ENCODE measurements at regions of chr16 and their contacts with region 1.

Region 1: GRCh38 chr16:19094541-19095365 is 19.0 kb upstream of the ITPRIPL2 start:
- DNase-seq: no peak
- ATAC-seq: no peak
- H3K4me3 ChIP-seq: no peak overlapping the region
- H3K27ac ChIP-seq: no peak overlapping the region
- H3K4me1 ChIP-seq: peaks cover 0 to 5% (median 0%) of the 10 kb centered on the region in 12 donors
- H3K27me3 ChIP-seq: no peaks in the 10 kb centered on the region
- CTCF ChIP-seq: peak in 3 of 12 donors; percentile 7 to 14 (median 10)
- POLR2A ChIP-seq: no peak

Region 2: GRCh38 chr16:18950469-18951185 is 144.1 kb before region 1 on chr16:
- intact Hi-C with region 1: no loop called
- DNase-seq: no peak
- ATAC-seq: no peak
- H3K4me3 ChIP-seq: no peak overlapping the region
- H3K27ac ChIP-seq: no peak overlapping the region
- H3K4me1 ChIP-seq: peaks cover 0 to 8% (median 0%) of the 10 kb centered on the region in 12 donors
- H3K27me3 ChIP-seq: no peaks in the 10 kb centered on the region
- CTCF ChIP-seq: no peak
- POLR2A ChIP-seq: no peak

Region 3: GRCh38 chr16:19027416-19027815 is 67.3 kb before region 1 on chr16:
- intact Hi-C with region 1: no loop called
- DNase-seq: no peak
- ATAC-seq: no peak
- H3K4me3 ChIP-seq: no peak overlapping the region
- H3K27ac ChIP-seq: no peak overlapping the region
- H3K4me1 ChIP-seq: peaks cover 0 to 16% (median 0%) of the 10 kb centered on the region in 12 donors
- H3K27me3 ChIP-seq: no peaks in the 10 kb centered on the region
- CTCF ChIP-seq: no peak
- POLR2A ChIP-seq: no peak

Region 4: DNA sequence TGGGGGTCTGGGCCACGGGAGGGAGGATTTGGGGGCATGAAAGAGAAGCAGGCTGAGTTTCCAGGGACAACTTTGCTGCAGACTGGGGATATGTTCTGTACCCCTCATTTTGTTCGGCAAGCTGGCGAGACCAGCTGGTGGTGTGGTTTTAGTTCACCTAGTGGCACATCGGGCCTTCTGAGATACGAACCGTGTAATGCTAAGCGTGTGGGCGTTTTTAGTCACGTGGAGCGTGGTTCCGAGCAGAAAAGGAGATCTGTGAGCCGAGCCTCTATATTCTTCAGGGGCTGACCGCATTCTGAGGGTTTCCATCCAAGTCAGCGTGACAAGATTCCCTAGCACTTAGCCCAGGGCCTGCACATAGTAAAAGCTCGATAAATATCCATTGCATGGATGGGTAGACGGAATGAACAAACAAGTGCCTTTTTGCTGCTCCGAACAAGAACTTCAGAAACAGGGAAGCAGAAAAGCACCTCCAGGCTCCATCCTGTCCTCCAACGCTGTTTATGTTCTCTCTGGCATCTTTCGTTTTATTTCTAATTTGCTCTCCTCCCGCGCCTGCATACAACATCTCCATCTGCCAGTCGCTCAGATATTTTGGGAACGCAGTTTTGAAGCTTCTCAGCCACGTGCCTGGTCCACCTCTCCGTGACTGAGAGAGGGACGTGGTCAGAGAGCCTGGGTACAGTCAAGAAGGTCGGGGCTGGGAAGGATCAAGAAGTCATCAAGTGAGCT is 79.1 kb after region 1 on chr16:
- intact Hi-C with region 1: loop called in 8 of 10 experiments (anchors 5 to 10 kb)
- DNase-seq: no peak
- ATAC-seq: peak in 3 of 4 donors; percentile 13 to 34 (median 33)
- H3K4me3 ChIP-seq: peak overlapping the region in 1 of 12 donors; percentile 6
- H3K27ac ChIP-seq: peak overlapping the region in 1 of 12 donors; percentile 24
- H3K4me1 ChIP-seq: peaks cover 0 to 5% (median under 1%) of the 10 kb centered on the region in 12 donors
- H3K27me3 ChIP-seq: peaks cover 0 to 12% (median 2%) of the 10 kb centered on the region in 9 donors
- CTCF ChIP-seq: no peak
- POLR2A ChIP-seq: no peak

Measured in heart left ventricle (tissue), 16 donors.